ENCODE measurements at regions of chr19 and their contacts with region 1.

Region 1: DNA sequence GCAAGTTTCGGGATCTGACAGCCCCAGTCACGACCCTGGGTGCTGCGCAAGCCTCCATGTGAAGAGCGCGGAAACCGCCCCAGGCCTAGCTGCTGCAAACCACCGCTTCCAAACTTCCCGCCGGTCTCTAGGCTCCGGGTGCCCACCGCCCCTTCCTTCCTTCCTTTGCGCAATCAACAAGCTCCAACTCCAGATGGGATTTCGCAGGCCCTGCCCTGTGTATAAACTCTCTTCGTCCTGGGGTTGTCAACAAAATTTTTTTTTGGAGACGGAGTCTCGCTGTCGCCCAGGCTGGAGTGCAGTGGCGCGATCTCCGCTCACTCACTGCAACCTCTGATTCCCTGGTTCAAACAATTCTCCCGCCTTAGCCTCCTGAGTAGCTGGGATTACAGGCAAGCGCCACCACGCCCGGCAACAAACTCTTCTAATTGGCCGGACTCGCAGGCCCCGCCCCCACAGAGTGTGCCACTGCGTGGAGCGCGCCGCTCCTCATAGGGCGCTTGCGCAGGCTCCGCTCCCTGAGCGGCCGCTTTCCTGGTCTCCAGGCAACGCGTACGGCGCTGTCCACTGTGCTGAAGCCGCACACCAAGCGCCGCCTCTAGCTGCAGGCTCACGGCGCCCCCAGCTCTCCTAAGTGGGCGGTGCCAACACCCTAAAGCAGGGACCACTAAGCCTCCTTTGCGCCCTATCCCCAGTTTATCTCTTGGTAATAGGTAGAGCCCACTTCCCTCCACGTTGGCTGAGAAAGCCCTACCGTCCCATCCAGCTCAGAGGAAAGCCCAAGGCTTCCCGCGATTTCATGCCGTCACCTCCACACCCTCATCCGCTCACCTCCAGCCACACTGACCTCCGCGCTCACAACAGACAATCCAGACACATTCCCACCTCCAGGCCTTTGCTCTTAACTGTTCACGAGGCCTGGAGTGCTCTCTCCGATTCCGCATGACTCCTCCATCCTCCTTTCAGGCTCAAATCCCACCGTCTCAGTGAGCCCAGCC is 5.5 kb upstream of the QTRT1 start:
- DNase-seq: peak; percentile 86
- ATAC-seq: peak; percentile 96
- H3K4me3 ChIP-seq: no peak overlapping the region
- H3K27ac ChIP-seq: peak overlapping the region; percentile 22; the same call in 1 of the 2 replicates
- H3K4me1 ChIP-seq: peaks cover 3 to 16% of the 10 kb centered on the region in 2 experiments; a peak in 3 of 4 replicates
- H3K27me3 ChIP-seq: no peaks in the 10 kb centered on the region
- CTCF ChIP-seq: no peak
- POLR2A ChIP-seq: no peak
- RAD21 ChIP-seq: no peak

Region 2: GRCh38 chr19:10403137-10404021 is 292.3 kb before region 1 on chr19 and contains the start of gene CDC37:
- CTCF ChIA-PET with region 1: interaction called, 8 read pairs
- POLR2A ChIA-PET with region 1: no interaction called
- RAD21 ChIA-PET with region 1: interaction called in 1 of 2 experiments, 4 read pairs
- intact Hi-C with region 1: loop called (anchors 1 kb)
- DNase-seq: peak; percentile 93
- ATAC-seq: peak; percentile 84
- H3K4me3 ChIP-seq: peak within 1 kb of the TSS; percentile 94 to 100
- H3K27ac ChIP-seq: peak within 1 kb of the TSS; percentile 79
- H3K4me1 ChIP-seq: peaks cover 11 to 36% of the 10 kb centered on the region in 2 experiments
- H3K27me3 ChIP-seq: no peaks in the 10 kb centered on the region
- CTCF ChIP-seq: no peak
- POLR2A ChIP-seq: peak; percentile 47
- RAD21 ChIP-seq: no peak
- total RNA-seq, gene CDC37: 260 TPM

Region 3: GRCh38 chr19:10478903-10479384 is 216.8 kb before region 1 on chr19:
- CTCF ChIA-PET with region 1: interaction called, 23 read pairs
- POLR2A ChIA-PET with region 1: no interaction called
- RAD21 ChIA-PET with region 1: no interaction called
- intact Hi-C with region 1: loop called (anchors 2 kb)
- DNase-seq: peak; percentile 80
- ATAC-seq: peak; percentile 93
- H3K4me3 ChIP-seq: no peak overlapping the region
- H3K27ac ChIP-seq: no peak overlapping the region
- H3K4me1 ChIP-seq: peaks cover 2 to 19% of the 10 kb centered on the region in 2 experiments; a peak in 3 of 4 replicates
- H3K27me3 ChIP-seq: no peaks in the 10 kb centered on the region
- CTCF ChIP-seq: peak; percentile 37 to 48 (median 45); a peak in 4 of 6 replicates
- POLR2A ChIP-seq: no peak
- RAD21 ChIP-seq: peak; percentile 19; the same call in 1 of the 2 replicates

Region 4: GRCh38 chr19:10580979-10581631 is 114.6 kb before region 1 on chr19:
- CTCF ChIA-PET with region 1: interaction called, 32 read pairs
- POLR2A ChIA-PET with region 1: no interaction called
- RAD21 ChIA-PET with region 1: interaction called, 5 to 6 read pairs
- intact Hi-C with region 1: loop called (anchors 2 kb)
- DNase-seq: peak; percentile 87
- ATAC-seq: peak; percentile 82
- H3K4me3 ChIP-seq: no peak overlapping the region
- H3K27ac ChIP-seq: no peak overlapping the region; the same call in 1 of the 2 replicates
- H3K4me1 ChIP-seq: peaks cover 8 to 20% of the 10 kb centered on the region in 2 experiments; a peak in 3 of 4 replicates
- H3K27me3 ChIP-seq: no peaks in the 10 kb centered on the region
- CTCF ChIP-seq: peak; percentile 98 to 99 (median 99)
- POLR2A ChIP-seq: no peak
- RAD21 ChIP-seq: peak; percentile 97

Region 5: GRCh38 chr19:10644260-10645007 is 51.3 kb before region 1 on chr19:
- CTCF ChIA-PET with region 1: interaction called, 11 read pairs
- POLR2A ChIA-PET with region 1: no interaction called
- RAD21 ChIA-PET with region 1: interaction called, 3 to 10 read pairs
- intact Hi-C with region 1: no loop called
- DNase-seq: peak; percentile 35
- ATAC-seq: peak; percentile 95
- H3K4me3 ChIP-seq: no peak overlapping the region
- H3K27ac ChIP-seq: peak overlapping the region; percentile 25; the same call in 1 of the 2 replicates
- H3K4me1 ChIP-seq: peaks cover 5 to 13% of the 10 kb centered on the region in 2 experiments; a peak in 3 of 4 replicates
- H3K27me3 ChIP-seq: no peaks in the 10 kb centered on the region
- CTCF ChIP-seq: peak; percentile 83 to 97 (median 85)
- POLR2A ChIP-seq: no peak
- RAD21 ChIP-seq: peak; percentile 96

Region 6: DNA sequence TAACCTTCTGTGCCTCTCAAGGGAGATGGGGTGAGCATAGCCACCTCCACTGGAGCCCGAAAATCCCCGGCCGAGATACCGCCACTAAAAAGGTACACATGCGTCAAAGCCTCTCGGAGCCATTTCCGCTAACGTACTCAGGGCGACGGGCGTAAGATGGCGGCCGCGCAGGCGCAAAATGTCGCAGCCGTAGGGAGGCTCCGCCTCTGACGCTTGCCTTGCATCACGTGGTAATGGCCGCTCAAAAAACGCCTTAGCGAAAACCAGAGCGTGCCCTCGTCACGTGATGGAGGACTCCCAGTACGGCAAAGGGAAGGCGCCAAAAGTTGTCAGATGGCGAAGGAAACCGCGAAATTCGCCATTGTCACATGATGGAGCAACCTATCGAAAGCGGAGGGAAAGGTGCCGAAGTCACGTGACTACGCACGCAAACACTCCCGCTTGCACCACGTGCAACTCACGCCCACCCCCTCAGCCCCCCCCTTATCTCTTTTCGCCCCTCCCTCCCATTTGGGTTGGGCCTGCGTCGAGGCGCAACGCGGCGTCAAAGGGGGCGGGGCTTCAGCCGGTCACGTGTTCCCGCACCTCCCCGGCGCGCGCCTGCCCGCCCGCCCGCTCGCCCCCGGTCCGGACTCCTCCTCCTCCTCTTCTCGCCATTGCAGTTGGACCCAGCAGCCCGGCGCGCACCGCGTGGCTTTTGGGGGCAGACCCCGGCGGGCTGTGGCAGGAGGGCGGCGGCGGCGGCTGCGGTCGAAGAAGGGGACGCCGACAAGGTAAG is 41.8 kb before region 1 on chr19 and contains the start of gene ILF3:
- CTCF ChIA-PET with region 1: interaction called, 3 read pairs
- POLR2A ChIA-PET with region 1: no interaction called
- RAD21 ChIA-PET with region 1: no interaction called
- intact Hi-C with region 1: loop called (anchors 5 kb)
- DNase-seq: peak; percentile 100
- ATAC-seq: peak; percentile 80
- H3K4me3 ChIP-seq: peak within 1 kb of the TSS; percentile 80 to 99
- H3K27ac ChIP-seq: peak within 1 kb of the TSS; percentile 94
- H3K4me1 ChIP-seq: peaks cover 11 to 31% of the 10 kb centered on the region in 2 experiments
- H3K27me3 ChIP-seq: no peaks in the 10 kb centered on the region
- CTCF ChIP-seq: no peak
- POLR2A ChIP-seq: peak; percentile 90
- RAD21 ChIP-seq: no peak
- total RNA-seq, gene ILF3: 430 TPM

Region 7: DNA sequence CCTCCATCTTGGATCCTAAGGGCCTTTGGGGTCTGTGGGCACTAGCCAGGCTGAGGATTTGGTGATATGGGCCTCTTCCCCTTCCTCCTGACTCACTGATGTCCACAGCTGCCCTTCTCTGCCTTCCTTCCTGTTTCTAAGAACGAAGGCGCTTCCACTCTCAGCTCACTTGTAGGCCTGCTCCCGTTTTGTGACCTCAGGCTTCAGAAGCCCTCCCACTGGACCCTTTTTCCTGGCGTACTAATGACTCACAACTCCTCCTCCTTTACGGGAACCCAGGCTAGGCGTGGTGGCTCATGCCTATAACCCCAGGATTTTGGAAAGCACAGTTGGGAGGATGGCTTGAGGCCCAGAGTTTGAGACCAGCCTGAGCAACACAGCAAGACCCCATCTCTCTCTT is 84.7 kb after region 1 on chr19:
- CTCF ChIA-PET with region 1: no interaction called
- POLR2A ChIA-PET with region 1: no interaction called
- RAD21 ChIA-PET with region 1: no interaction called
- intact Hi-C with region 1: no loop called
- DNase-seq: no peak
- ATAC-seq: no peak
- H3K4me3 ChIP-seq: no peak overlapping the region
- H3K27ac ChIP-seq: no peak overlapping the region
- H3K4me1 ChIP-seq: no peaks in the 10 kb centered on the region
- H3K27me3 ChIP-seq: no peaks in the 10 kb centered on the region
- CTCF ChIP-seq: no peak
- POLR2A ChIP-seq: no peak
- RAD21 ChIP-seq: no peak

Measured in HCT116 (cell line).